Activated CD4-positive, alpha-beta memory T cell treated with anti-CD3 and anti-CD28 coated beads for 36 hours (primary cell): ENCODE measurements at regions of chr9 and their contacts with region 1.

Region 1: DNA sequence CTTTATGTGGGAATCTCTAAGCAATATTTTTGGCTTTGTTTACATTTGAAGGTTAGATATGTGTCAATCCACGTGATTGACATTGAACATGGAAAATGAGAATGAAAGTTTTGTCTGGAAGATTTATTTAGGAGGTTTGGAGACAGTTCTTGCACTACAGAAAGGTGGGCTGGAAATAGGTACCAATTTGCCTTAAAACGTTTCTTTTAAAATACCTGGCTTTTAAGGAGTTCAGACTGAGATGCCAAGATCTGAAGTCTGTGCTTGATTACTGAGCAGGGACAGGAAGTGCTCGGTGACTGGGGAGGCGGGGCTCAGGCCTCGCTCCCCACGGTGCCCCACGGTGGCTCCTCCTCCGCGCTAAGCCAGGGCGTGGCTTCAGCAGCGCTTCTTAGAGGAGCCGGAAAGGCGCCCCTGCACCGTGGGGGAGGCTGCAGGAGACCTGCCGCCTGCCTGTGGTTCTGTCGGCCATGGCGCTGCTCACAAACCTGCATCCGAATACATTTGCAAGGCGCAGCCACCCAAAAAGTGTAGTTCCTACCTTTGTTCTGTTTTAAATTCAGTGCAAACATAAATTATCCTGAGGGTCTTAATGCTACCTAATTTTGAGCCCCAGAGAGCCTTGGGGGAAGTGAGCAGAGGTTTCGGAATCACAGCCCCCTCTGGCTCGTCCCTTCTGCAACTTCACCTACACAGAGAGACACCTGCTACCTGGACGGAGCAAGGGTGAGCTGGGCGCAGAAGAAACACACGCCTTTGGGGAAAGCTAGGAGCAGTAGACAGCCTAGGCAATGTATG is 49.2 kb downstream of the USP20 start:
- DNase-seq: peak; percentile 98
- H3K4me3 Mint-ChIP-seq: peak overlapping the region; percentile 93
- H3K27ac Mint-ChIP-seq: peak overlapping the region; percentile 97
- H3K4me1 Mint-ChIP-seq: peaks cover 41% of the 10 kb centered on the region
- H3K27me3 Mint-ChIP-seq: no peaks in the 10 kb centered on the region

Region 2: GRCh38 chr9:129823935-129824601 is 60.4 kb before region 1 on chr9 and contains the start of gene TOR1A:
- CTCF ChIA-PET with region 1: no interaction called
- POLR2A ChIA-PET with region 1: no interaction called
- intact Hi-C with region 1: no loop called
- DNase-seq: peak; percentile 96
- H3K4me3 Mint-ChIP-seq: peak within 1 kb of the TSS; percentile 81
- H3K27ac Mint-ChIP-seq: peak within 1 kb of the TSS; percentile 80
- H3K4me1 Mint-ChIP-seq: peaks cover 13% of the 10 kb centered on the region
- H3K27me3 Mint-ChIP-seq: no peaks in the 10 kb centered on the region
- total RNA-seq, gene TOR1A: 38.5 to 41.6 TPM

Region 3: GRCh38 chr9:129835021-129835871 is 49.2 kb before region 1 on chr9 and contains the starts of genes C9orf78 and USP20:
- CTCF ChIA-PET with region 1: interaction called, 15 read pairs
- POLR2A ChIA-PET with region 1: interaction called, 8 read pairs
- intact Hi-C with region 1: loop called (anchors 1 kb)
- DNase-seq: peak; percentile 97
- H3K4me3 Mint-ChIP-seq: peak within 1 kb of the TSS; percentile 98
- H3K27ac Mint-ChIP-seq: peak within 1 kb of the TSS; percentile 92
- H3K4me1 Mint-ChIP-seq: peaks cover 54% of the 10 kb centered on the region
- H3K27me3 Mint-ChIP-seq: no peaks in the 10 kb centered on the region
- total RNA-seq, gene C9orf78: 43.6 to 47.0 TPM
- total RNA-seq, gene USP20: 51.6 to 55.3 TPM

Region 4: GRCh38 chr9:129944506-129945116 is 60.2 kb after region 1 on chr9:
- CTCF ChIA-PET with region 1: interaction called, 5 read pairs
- POLR2A ChIA-PET with region 1: interaction called, 4 read pairs
- intact Hi-C with region 1: loop called (anchors 1 kb)
- DNase-seq: peak; percentile 76
- H3K4me3 Mint-ChIP-seq: peak overlapping the region; percentile 12
- H3K27ac Mint-ChIP-seq: peak overlapping the region; percentile 71
- H3K4me1 Mint-ChIP-seq: peaks cover 49% of the 10 kb centered on the region
- H3K27me3 Mint-ChIP-seq: no peaks in the 10 kb centered on the region

Region 5: GRCh38 chr9:129995409-129996160 is 111.2 kb after region 1 on chr9:
- CTCF ChIA-PET with region 1: interaction called, 3 read pairs
- POLR2A ChIA-PET with region 1: interaction called, 10 read pairs
- intact Hi-C with region 1: loop called (anchors 1 kb)
- DNase-seq: peak; percentile 68
- H3K4me3 Mint-ChIP-seq: peak overlapping the region; percentile 64
- H3K27ac Mint-ChIP-seq: peak overlapping the region; percentile 96
- H3K4me1 Mint-ChIP-seq: peaks cover 82% of the 10 kb centered on the region
- H3K27me3 Mint-ChIP-seq: no peaks in the 10 kb centered on the region

Region 6: GRCh38 chr9:130053504-130054324 is 169.3 kb after region 1 on chr9 and contains the start of gene GPR107:
- CTCF ChIA-PET with region 1: interaction called, 9 read pairs
- POLR2A ChIA-PET with region 1: interaction called, 14 read pairs
- intact Hi-C with region 1: no loop called
- DNase-seq: peak; percentile 88
- H3K4me3 Mint-ChIP-seq: peak within 1 kb of the TSS; percentile 92
- H3K27ac Mint-ChIP-seq: peak within 1 kb of the TSS; percentile 90
- H3K4me1 Mint-ChIP-seq: peaks cover 32% of the 10 kb centered on the region
- H3K27me3 Mint-ChIP-seq: no peaks in the 10 kb centered on the region
- total RNA-seq, gene GPR107: 20.7 to 22.8 TPM

Region 7: GRCh38 chr9:130243015-130243734 is 358.8 kb after region 1 on chr9:
- CTCF ChIA-PET with region 1: interaction called, 3 read pairs
- POLR2A ChIA-PET with region 1: no interaction called
- intact Hi-C with region 1: loop called (anchors 2 kb)
- DNase-seq: peak; percentile 88
- H3K4me3 Mint-ChIP-seq: peak overlapping the region; percentile 53
- H3K27ac Mint-ChIP-seq: peak overlapping the region; percentile 7
- H3K4me1 Mint-ChIP-seq: peaks cover 32% of the 10 kb centered on the region
- H3K27me3 Mint-ChIP-seq: no peaks in the 10 kb centered on the region

Region 8: GRCh38 chr9:130782886-130783530 is 898.6 kb after region 1 on chr9:
- CTCF ChIA-PET with region 1: no interaction called
- POLR2A ChIA-PET with region 1: no interaction called
- intact Hi-C with region 1: no loop called
- DNase-seq: no peak
- H3K4me3 Mint-ChIP-seq: no peak overlapping the region
- H3K27ac Mint-ChIP-seq: no peak overlapping the region
- H3K4me1 Mint-ChIP-seq: peaks cover 5% of the 10 kb centered on the region
- H3K27me3 Mint-ChIP-seq: no peaks in the 10 kb centered on the region